Left cardiac atrium (tissue), 4 donors: ENCODE measurements at regions of chr22 and their contacts with region 1.

Region 1: DNA sequence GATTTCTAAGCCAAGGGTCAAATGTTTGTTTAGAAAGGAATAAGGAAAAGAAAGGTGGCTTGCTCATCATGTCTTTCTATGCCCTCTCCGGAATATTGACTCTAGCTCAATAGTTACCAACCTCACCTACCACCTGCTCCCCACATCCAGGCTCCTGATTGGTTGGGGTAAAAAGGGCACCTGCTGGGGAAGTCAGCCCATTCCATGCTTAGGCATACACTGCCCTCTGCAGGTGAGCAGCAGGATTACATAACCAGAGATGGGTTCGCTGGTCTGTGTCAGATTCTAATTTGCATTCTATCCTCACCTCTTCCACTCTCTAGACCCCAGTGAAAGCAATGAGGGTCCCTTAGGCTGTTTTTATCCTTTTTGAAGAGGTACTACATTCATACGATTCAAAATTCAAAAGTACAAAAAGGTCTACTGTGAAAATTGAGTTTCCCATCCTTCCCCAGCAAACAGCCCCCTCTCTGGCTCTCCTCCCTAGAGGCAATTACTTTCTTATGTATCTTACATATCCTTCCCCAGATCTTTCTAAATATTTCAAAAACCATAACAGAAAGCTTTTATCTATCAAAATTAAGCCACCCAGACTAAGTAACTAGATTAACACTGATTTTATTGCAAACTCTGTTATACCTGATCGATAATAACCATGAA is 98.0 kb upstream of the ASPHD2 start:
- DNase-seq: peak; percentile 28
- ATAC-seq: peak; percentile 34 to 60

Region 2: DNA sequence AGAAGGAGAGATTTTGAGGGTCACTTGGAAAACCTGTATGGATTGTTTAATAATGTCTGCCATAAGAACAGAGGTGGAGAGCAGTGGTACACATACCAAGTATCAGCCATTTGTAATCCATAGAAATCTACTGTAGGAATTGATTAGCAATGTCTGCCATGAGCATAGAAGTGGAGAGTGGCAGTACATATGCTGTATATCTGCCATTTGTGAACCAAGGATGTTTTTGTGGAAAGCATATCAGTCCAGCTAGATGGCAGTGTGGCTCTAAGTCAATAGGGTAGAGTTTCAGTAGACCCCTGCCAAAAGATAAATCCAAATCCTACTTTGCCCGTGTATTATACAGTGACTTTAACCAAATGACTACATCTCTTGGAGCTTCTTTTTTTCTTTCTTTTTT is 244.7 kb before region 1 on chr22:
- intact Hi-C with region 1: loop called (anchors 10 kb)
- DNase-seq: no peak
- ATAC-seq: no peak

Region 3: GRCh38 chr22:26172389-26172990 is 158.6 kb before region 1 on chr22:
- intact Hi-C with region 1: loop called (anchors 10 kb)
- DNase-seq: peak; percentile 32
- ATAC-seq: no peak

Region 4: DNA sequence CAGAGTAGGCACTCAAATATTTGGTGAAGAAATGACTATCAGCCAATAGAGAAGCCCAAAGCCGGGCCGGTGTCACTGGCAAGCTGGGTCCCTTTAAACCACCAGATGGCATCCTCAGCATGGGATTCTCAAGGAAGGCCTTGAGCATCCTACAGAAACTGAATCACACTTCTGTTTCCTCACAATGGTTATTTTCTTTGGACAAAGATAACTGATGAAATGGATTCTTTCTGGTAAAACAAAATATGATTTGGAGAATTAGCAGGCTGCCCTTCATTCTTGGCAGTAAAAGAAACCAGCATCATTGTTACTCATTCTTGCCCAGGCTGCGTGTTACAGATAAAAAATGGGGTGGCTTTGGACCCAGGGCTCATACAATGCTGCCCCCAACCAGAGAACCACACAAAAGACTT is 67.7 kb after region 1 on chr22:
- intact Hi-C with region 1: no loop called
- DNase-seq: peak; percentile 57
- ATAC-seq: peak; percentile 70 to 92